CD8-positive, alpha-beta T cell (primary cell): ENCODE measurements at regions of chr3 and their contacts with region 1.

Region 1: DNA sequence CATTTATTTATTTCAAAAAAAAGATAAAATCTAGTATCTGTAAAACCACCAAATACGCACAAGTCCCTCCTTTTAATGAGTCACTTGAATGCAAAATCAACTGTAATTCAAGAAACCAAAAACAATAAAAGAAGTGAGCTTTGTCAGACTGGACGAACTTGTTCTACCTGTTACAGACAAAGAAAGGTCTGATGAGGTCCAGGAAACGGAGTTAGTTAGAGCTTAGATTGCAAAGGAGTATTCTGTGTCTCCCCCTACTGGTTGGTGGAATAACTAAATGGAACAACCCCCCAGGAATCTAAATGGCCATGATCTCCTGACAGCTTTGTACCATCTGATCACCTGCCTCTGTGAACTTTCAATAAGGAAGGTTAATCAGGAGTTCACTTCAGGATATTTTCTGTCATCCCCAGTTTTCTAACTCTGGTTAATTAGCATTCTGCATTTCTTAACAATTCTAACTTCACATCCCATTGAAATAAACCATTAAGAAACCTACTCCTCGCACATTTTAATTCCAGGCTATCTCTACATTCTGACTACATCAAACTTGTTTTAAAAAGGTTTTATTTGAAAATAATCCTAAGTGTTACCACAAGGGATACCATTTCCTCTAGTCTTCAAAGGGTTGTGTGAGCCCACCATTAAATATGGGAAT is 333.0 kb upstream of the SATB1 start:
- DNase-seq: peak in 6 of 9 experiments; percentile 12 to 91 (median 36)
- ATAC-seq: peak; percentile 97
- H3K4me3 ChIP-seq: no peak overlapping the region
- H3K4me3 Mint-ChIP-seq: no peak overlapping the region
- H3K27ac ChIP-seq: no peak overlapping the region
- H3K27ac Mint-ChIP-seq: peak overlapping the region; percentile 64
- H3K4me1 ChIP-seq: peaks cover 18% of the 10 kb centered on the region
- H3K4me1 Mint-ChIP-seq: peaks cover 44% of the 10 kb centered on the region
- H3K27me3 ChIP-seq: no peaks in the 10 kb centered on the region
- H3K27me3 Mint-ChIP-seq: no peaks in the 10 kb centered on the region
- CTCF ChIP-seq: peak; percentile 88

Region 2: DNA sequence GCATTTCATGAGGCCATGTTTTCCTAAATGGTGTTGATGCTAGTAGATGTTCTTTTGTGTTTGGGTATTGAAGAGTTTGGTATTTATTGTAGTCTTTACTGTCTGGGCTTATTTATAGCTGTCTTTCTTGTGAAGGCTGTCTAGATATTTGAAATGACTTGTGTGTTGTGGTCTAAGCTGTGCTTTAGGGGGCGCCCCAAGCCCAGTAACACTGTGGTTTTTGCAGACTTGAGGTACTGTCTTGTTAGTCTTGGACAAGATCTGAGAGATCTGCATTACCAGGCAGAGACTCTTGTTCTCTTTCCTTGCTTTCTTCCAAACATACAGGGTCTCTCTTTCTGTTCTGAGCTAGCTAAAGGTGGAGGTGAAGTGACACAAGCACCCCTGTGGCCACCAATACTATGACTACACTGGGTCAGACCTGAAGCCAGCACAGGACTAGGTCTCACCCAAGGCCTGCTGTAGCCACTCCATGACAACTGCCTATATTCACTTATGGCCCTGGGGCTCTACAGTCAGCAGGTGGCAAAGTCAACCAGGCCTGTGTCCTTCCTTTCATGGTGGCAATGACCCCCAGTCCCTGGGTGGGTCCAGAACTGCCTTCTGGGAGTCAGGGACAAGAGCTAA is 863.6 kb before region 1 on chr3:
- CTCF ChIA-PET with region 1: no interaction called
- POLR2A ChIA-PET with region 1: no interaction called
- intact Hi-C with region 1: loop called in 1 of 2 experiments (anchors 10 kb)
- DNase-seq: peak in 7 of 9 experiments; percentile 9 to 49 (median 33)
- ATAC-seq: no peak
- H3K4me3 ChIP-seq: no peak overlapping the region
- H3K4me3 Mint-ChIP-seq: no peak overlapping the region
- H3K27ac ChIP-seq: no peak overlapping the region
- H3K27ac Mint-ChIP-seq: no peak overlapping the region
- H3K4me1 ChIP-seq: no peaks in the 10 kb centered on the region
- H3K4me1 Mint-ChIP-seq: no peaks in the 10 kb centered on the region
- H3K27me3 ChIP-seq: no peaks in the 10 kb centered on the region
- H3K27me3 Mint-ChIP-seq: no peaks in the 10 kb centered on the region
- CTCF ChIP-seq: peak; percentile 17

Region 3: GRCh38 chr3:18389108-18389733 is 369.0 kb before region 1 on chr3:
- CTCF ChIA-PET with region 1: interaction called, 3 read pairs
- POLR2A ChIA-PET with region 1: no interaction called
- intact Hi-C with region 1: loop called (anchors 1 to 5 kb)
- DNase-seq: peak in 5 of 9 experiments; percentile 31 to 70 (median 38)
- ATAC-seq: peak; percentile 58
- H3K4me3 ChIP-seq: no peak overlapping the region
- H3K4me3 Mint-ChIP-seq: no peak overlapping the region
- H3K27ac ChIP-seq: no peak overlapping the region
- H3K27ac Mint-ChIP-seq: peak overlapping the region; percentile 57
- H3K4me1 ChIP-seq: peaks cover 68% of the 10 kb centered on the region
- H3K4me1 Mint-ChIP-seq: peaks cover 83% of the 10 kb centered on the region
- H3K27me3 ChIP-seq: no peaks in the 10 kb centered on the region
- H3K27me3 Mint-ChIP-seq: no peaks in the 10 kb centered on the region
- CTCF ChIP-seq: peak; percentile 91

Region 4: GRCh38 chr3:18489939-18490338 is 268.2 kb before region 1 on chr3:
- CTCF ChIA-PET with region 1: interaction called, 3 read pairs
- POLR2A ChIA-PET with region 1: no interaction called
- intact Hi-C with region 1: loop called in 1 of 2 experiments (anchors 5 kb)
- DNase-seq: peak in 6 of 9 experiments; percentile 12 to 72 (median 54)
- ATAC-seq: peak; percentile 46
- H3K4me3 ChIP-seq: no peak overlapping the region
- H3K4me3 Mint-ChIP-seq: peak overlapping the region; percentile 9
- H3K27ac ChIP-seq: no peak overlapping the region
- H3K27ac Mint-ChIP-seq: peak overlapping the region; percentile 78
- H3K4me1 ChIP-seq: peaks cover 24% of the 10 kb centered on the region
- H3K4me1 Mint-ChIP-seq: peaks cover 38% of the 10 kb centered on the region
- H3K27me3 ChIP-seq: no peaks in the 10 kb centered on the region
- H3K27me3 Mint-ChIP-seq: no peaks in the 10 kb centered on the region
- CTCF ChIP-seq: no peak

Region 5: DNA sequence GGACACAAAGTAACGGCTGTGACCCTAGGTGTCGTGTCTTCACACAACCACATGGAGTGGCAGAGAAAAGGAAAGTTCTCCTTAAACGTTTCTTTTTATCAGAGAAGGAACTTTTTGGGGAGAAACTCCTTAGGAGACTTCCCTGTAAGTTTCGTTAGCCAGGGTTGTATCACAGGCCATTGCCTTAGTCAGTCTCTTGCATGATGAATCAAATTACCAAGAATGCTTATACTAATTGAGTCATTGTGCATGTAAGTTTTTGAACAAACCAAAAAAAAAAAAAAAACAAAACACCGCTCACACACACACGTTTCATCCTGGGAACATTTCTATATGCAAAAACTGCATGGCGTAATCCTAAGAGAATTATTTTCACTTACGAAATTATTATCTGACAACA is 182.6 kb before region 1 on chr3:
- CTCF ChIA-PET with region 1: interaction called, 13 read pairs
- POLR2A ChIA-PET with region 1: no interaction called
- intact Hi-C with region 1: no loop called
- DNase-seq: no peak
- ATAC-seq: no peak
- H3K4me3 ChIP-seq: no peak overlapping the region
- H3K4me3 Mint-ChIP-seq: no peak overlapping the region
- H3K27ac ChIP-seq: no peak overlapping the region
- H3K27ac Mint-ChIP-seq: no peak overlapping the region
- H3K4me1 ChIP-seq: no peaks in the 10 kb centered on the region
- H3K4me1 Mint-ChIP-seq: peaks cover 16% of the 10 kb centered on the region
- H3K27me3 ChIP-seq: no peaks in the 10 kb centered on the region
- H3K27me3 Mint-ChIP-seq: no peaks in the 10 kb centered on the region
- CTCF ChIP-seq: no peak

Region 6: DNA sequence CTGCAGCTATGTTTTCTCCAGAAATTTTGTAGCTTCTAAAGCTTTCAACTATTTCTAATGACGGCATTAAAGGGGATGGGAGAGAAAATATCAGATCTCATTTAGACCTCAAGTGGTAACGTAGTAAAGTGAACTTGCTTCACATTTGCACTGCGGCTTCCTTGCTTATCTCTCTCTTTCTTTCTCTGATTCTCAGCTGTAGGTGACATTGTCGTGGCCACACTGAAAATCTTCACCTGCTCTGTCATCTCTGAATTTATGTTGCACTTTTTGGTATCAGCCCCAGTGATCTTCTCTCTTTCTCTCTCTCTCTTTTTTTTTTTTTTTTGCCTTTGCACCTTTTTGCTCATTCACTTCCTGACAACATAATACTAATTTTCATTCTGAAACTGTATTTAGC is 78.9 kb before region 1 on chr3:
- CTCF ChIA-PET with region 1: interaction called, 6 read pairs
- POLR2A ChIA-PET with region 1: interaction called, 3 read pairs
- intact Hi-C with region 1: loop called in 1 of 2 experiments (anchors 5 kb)
- DNase-seq: peak in 7 of 9 experiments; percentile 4 to 84 (median 32)
- ATAC-seq: peak; percentile 91
- H3K4me3 ChIP-seq: no peak overlapping the region
- H3K4me3 Mint-ChIP-seq: peak overlapping the region; percentile 50
- H3K27ac ChIP-seq: peak overlapping the region in 1 of 2 experiments; percentile 61
- H3K27ac Mint-ChIP-seq: peak overlapping the region; percentile 75
- H3K4me1 ChIP-seq: peaks cover 39% of the 10 kb centered on the region
- H3K4me1 Mint-ChIP-seq: peaks cover 68% of the 10 kb centered on the region
- H3K27me3 ChIP-seq: no peaks in the 10 kb centered on the region
- H3K27me3 Mint-ChIP-seq: no peaks in the 10 kb centered on the region
- CTCF ChIP-seq: no peak

Region 7: DNA sequence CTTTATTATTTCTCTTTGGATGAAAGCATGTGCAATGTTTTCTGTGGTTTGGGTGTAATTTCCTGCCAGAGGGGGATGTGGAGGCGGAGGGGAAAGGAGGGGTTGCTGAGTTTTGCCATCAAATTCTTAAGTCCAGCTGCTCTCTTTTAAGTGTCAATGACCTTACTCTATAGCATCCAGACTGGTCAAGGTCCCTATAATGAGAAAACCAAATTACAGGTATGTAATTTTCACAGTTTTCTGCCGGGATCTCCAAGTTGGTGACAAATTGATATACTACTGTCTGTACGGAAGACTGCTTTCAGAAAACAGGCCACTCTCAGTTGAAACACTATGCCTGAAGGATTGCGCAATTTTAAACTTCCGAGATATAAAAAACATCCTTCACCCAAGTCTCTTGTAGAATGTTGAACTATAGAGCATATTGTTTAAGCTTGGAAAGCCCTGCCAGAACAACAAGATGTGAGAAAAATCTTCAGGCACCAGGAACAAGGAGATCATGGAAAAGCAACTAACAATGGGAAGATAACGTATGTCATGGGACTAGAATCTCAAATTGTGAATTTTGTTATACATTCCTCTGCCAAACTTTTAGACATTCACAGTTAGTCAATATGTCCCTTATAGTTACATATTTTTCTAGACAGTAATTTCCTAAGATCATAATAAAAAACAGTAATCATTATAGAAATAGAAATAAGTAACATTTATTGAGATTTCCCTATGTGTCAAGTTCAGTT is 32.3 kb before region 1 on chr3:
- CTCF ChIA-PET with region 1: interaction called, 19 read pairs
- POLR2A ChIA-PET with region 1: interaction called, 5 read pairs
- intact Hi-C with region 1: no loop called
- DNase-seq: peak in 8 of 9 experiments; percentile 21 to 77 (median 36)
- ATAC-seq: peak; percentile 79
- H3K4me3 ChIP-seq: peak overlapping the region; percentile 2 to 39
- H3K4me3 Mint-ChIP-seq: peak overlapping the region; percentile 54
- H3K27ac ChIP-seq: peak overlapping the region; percentile 38 to 82
- H3K27ac Mint-ChIP-seq: peak overlapping the region; percentile 97
- H3K4me1 ChIP-seq: peaks cover 64% of the 10 kb centered on the region
- H3K4me1 Mint-ChIP-seq: peaks cover 80% of the 10 kb centered on the region
- H3K27me3 ChIP-seq: no peaks in the 10 kb centered on the region
- H3K27me3 Mint-ChIP-seq: no peaks in the 10 kb centered on the region
- CTCF ChIP-seq: no peak

Region 8: GRCh38 chr3:20001932-20002331 is 1243.8 kb after region 1 on chr3:
- CTCF ChIA-PET with region 1: no interaction called
- POLR2A ChIA-PET with region 1: no interaction called
- intact Hi-C with region 1: no loop called
- DNase-seq: no peak
- ATAC-seq: no peak
- H3K4me3 ChIP-seq: no peak overlapping the region
- H3K4me3 Mint-ChIP-seq: no peak overlapping the region
- H3K27ac ChIP-seq: no peak overlapping the region
- H3K27ac Mint-ChIP-seq: no peak overlapping the region
- H3K4me1 ChIP-seq: no peaks in the 10 kb centered on the region
- H3K4me1 Mint-ChIP-seq: no peaks in the 10 kb centered on the region
- H3K27me3 ChIP-seq: no peaks in the 10 kb centered on the region
- H3K27me3 Mint-ChIP-seq: no peaks in the 10 kb centered on the region
- CTCF ChIP-seq: no peak